Spleen (tissue), 13 donors: ENCODE measurements at regions of chr1 and their contacts with region 1.

Region 1: GRCh38 chr1:31815752-31816500 is at the start of gene SPOCD1:
- DNase-seq: peak; percentile 95
- H3K4me3 ChIP-seq: no peak within 1 kb of the TSS
- H3K27ac ChIP-seq: peak within 1 kb of the TSS in 7 of 8 donors; percentile 19 to 71 (median 44)
- H3K4me1 ChIP-seq: peaks cover 0 to 58% (median 26%) of the 10 kb centered on the region in 6 donors
- H3K27me3 ChIP-seq: no peaks in the 10 kb centered on the region
- CTCF ChIP-seq: peak; percentile 62 to 94 (median 77)
- POLR2A ChIP-seq: no peak
- total RNA-seq, gene SPOCD1: 1.2 to 5.0 (median 4.1) TPM

Region 2: DNA sequence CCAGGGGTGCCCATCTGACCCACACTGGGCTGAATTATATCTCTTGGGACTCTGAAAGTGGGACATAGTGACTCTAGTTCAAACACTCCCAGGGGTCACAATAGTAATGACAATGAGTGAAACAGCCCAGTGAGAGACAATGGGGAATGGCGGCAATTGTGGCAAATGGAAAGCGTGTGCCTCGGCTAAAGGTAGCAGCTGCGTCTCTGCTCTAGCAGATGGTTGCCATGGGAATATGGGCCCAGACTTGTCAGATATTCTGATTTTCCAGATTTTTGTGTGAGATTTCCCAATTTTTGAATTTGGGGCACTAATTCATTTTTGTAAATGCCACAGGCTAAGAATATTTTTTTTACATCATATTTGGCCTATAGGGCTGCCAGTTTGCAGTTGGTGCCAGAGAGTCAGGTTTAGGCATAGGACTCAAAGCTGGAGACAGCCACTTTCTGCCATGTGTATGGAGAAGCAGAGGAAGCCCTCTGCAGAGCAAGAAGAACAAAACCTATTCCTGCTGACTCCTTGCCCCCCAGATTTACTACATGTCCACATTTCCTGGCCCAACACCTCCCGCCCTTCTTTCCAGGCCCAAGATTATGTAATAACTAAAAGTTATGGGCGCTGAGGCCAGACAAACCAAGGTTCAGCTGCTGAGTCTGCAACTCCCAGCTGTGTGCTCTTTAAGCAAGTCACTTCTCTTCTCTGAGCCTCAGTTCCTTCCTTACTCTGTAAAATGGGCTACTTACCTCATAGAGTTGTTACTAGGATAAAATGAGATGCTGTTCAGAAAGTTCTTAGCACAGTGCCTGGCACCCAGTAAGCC is 143.8 kb after region 1 on chr1:
- intact Hi-C with region 1: loop called (anchors 5 kb)
- DNase-seq: peak; percentile 23
- H3K4me3 ChIP-seq: no peak overlapping the region
- H3K27ac ChIP-seq: peak overlapping the region in 3 of 8 donors; percentile 12 to 95 (median 39)
- H3K4me1 ChIP-seq: peaks cover 28 to 100% (median 72%) of the 10 kb centered on the region in 6 donors
- H3K27me3 ChIP-seq: no peaks in the 10 kb centered on the region
- CTCF ChIP-seq: no peak
- POLR2A ChIP-seq: no peak

Region 3: DNA sequence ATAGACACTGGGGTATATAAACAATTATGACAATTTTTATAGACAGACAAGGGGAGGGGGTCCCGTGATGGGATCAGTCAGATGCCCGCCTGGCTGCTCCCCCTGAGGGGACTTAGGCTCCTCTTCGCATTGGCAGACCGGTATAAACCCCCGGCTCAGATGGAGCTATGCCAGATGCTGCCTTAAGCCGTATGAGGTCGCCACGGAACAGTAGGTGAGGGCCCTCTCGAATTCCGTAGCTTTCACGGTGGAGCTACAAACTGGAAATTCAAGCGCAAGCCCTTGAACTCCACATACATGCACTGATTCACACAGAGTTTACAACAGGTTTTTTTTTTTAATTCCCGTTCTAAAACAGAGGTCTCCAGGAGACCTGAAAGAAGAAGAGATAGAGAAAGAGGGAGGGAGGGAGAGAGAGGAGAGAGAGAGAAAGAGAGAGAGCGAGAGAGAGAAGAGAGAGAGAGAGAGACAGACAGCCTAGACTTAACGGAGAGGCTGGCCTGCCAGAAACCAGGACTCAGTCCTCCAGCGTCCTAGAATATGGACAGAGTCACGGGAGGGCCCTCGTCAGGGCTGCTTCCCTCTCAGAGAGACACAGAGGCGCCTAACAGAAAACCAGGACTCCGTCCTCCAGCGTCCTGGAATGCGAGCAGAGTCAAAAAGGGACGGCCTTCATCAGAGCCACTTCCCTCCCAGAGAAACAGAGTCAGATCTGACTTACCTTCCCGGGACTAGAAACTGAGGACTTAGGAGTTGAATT is 1109.7 kb after region 1 on chr1:
- intact Hi-C with region 1: no loop called
- DNase-seq: no peak
- H3K4me3 ChIP-seq: no peak overlapping the region
- H3K27ac ChIP-seq: no peak overlapping the region
- H3K4me1 ChIP-seq: peaks cover 0 to 25% (median 13%) of the 10 kb centered on the region in 6 donors
- H3K27me3 ChIP-seq: peaks cover 0 to 62% (median 25%) of the 10 kb centered on the region in 7 donors
- CTCF ChIP-seq: no peak
- POLR2A ChIP-seq: no peak